Naive thymus-derived CD4-positive, alpha-beta T cell (primary cell): ENCODE measurements at regions of chr1 and their contacts with region 1.

Region 1: DNA sequence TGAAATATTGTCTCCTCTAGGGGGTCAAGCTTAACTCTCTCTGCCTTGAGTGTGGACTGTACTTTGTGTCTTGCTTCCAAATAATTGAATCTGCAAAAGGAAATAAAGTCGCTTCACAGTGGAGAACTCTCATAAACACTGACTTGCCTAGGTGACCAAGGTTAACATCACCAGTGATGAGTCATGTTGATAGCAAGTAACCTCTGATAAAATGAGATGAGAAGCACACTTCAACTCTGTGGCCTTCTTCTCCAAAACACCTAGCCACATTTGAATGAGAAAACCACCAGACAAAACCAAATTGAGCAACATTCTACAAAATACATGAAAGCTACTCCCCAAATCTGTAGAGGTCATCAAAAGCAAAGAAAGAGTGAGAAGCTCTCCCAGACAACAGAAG is 37.6 kb downstream of the PDE4B start:
- DNase-seq: no peak
- ATAC-seq: no peak
- H3K4me3 ChIP-seq: no peak overlapping the region
- H3K4me3 Mint-ChIP-seq: peak overlapping the region in 1 of 10 donors; percentile 18
- H3K27ac ChIP-seq: no peak overlapping the region
- H3K27ac Mint-ChIP-seq: peak overlapping the region in 1 of 9 donors; percentile 10
- H3K4me1 ChIP-seq: no peaks in the 10 kb centered on the region
- H3K4me1 Mint-ChIP-seq: peaks cover 0 to 14% (median 0%) of the 10 kb centered on the region in 7 donors
- H3K27me3 ChIP-seq: no peaks in the 10 kb centered on the region
- H3K27me3 Mint-ChIP-seq: peaks cover 11 to 44% (median 20%) of the 10 kb centered on the region in 5 donors

Region 2: GRCh38 chr1:64437453-64437852 is 1392.9 kb before region 1 on chr1:
- CTCF ChIA-PET with region 1: no interaction called
- POLR2A ChIA-PET with region 1: no interaction called
- intact Hi-C with region 1: no loop called
- DNase-seq: no peak
- ATAC-seq: no peak
- H3K4me3 ChIP-seq: no peak overlapping the region
- H3K4me3 Mint-ChIP-seq: no peak overlapping the region
- H3K27ac ChIP-seq: no peak overlapping the region
- H3K27ac Mint-ChIP-seq: no peak overlapping the region
- H3K4me1 ChIP-seq: no peaks in the 10 kb centered on the region
- H3K4me1 Mint-ChIP-seq: no peaks in the 10 kb centered on the region
- H3K27me3 ChIP-seq: no peaks in the 10 kb centered on the region
- H3K27me3 Mint-ChIP-seq: peaks cover 0 to 5% (median 0%) of the 10 kb centered on the region in 5 donors

Region 3: DNA sequence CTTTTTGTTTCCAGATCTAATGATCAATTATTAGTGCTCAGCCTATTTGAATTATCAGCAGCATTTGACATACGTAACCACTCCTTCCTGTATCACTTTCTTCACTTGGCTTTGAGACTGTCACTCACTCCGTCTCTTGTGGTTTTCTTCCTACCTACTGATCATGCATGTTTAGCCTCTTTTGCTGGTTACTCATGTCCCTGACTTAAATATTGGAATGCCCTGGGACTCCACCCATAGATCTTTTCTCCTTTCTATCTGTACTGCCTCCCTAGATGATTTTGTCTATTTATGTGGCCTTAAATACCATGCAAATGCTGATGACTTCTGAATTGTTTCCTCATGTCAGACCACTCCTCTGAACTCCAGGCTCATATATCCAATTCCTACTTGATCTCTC is 95.3 kb before region 1 on chr1:
- CTCF ChIA-PET with region 1: no interaction called
- POLR2A ChIA-PET with region 1: no interaction called
- intact Hi-C with region 1: no loop called
- DNase-seq: no peak
- ATAC-seq: no peak
- H3K4me3 ChIP-seq: no peak overlapping the region
- H3K4me3 Mint-ChIP-seq: no peak overlapping the region
- H3K27ac ChIP-seq: no peak overlapping the region
- H3K27ac Mint-ChIP-seq: no peak overlapping the region
- H3K4me1 ChIP-seq: no peaks in the 10 kb centered on the region
- H3K4me1 Mint-ChIP-seq: no peaks in the 10 kb centered on the region
- H3K27me3 ChIP-seq: no peaks in the 10 kb centered on the region
- H3K27me3 Mint-ChIP-seq: peaks cover 0 to 13% (median 6%) of the 10 kb centered on the region in 5 donors

Region 4: GRCh38 chr1:65792669-65793358 is 37.5 kb before region 1 on chr1 and contains the start of gene PDE4B:
- CTCF ChIA-PET with region 1: no interaction called
- POLR2A ChIA-PET with region 1: no interaction called
- intact Hi-C with region 1: loop called in 1 of 2 experiments (anchors 5 kb)
- DNase-seq: no peak
- ATAC-seq: no peak
- H3K4me3 ChIP-seq: no peak within 1 kb of the TSS
- H3K4me3 Mint-ChIP-seq: peak within 1 kb of the TSS in 1 of 10 donors; percentile 62
- H3K27ac ChIP-seq: no peak within 1 kb of the TSS
- H3K27ac Mint-ChIP-seq: no peak within 1 kb of the TSS
- H3K4me1 ChIP-seq: no peaks in the 10 kb centered on the region
- H3K4me1 Mint-ChIP-seq: peaks cover 0 to 4% (median 0%) of the 10 kb centered on the region in 7 donors
- H3K27me3 ChIP-seq: no peaks in the 10 kb centered on the region
- H3K27me3 Mint-ChIP-seq: peaks cover 34 to 75% (median 41%) of the 10 kb centered on the region in 5 donors
- total RNA-seq, gene PDE4B: 43.5 to 99.2 (median 46.7) TPM

Region 5: GRCh38 chr1:65812065-65812464 is 18.2 kb before region 1 on chr1:
- CTCF ChIA-PET with region 1: no interaction called
- POLR2A ChIA-PET with region 1: no interaction called
- intact Hi-C with region 1: loop called in 1 of 2 experiments (anchors 1 kb)
- DNase-seq: peak in 1 of 9 donors; percentile 67
- ATAC-seq: peak; percentile 94
- H3K4me3 ChIP-seq: no peak overlapping the region
- H3K4me3 Mint-ChIP-seq: peak overlapping the region in 1 of 10 donors; percentile 3
- H3K27ac ChIP-seq: no peak overlapping the region
- H3K27ac Mint-ChIP-seq: peak overlapping the region in 1 of 9 donors; percentile 67
- H3K4me1 ChIP-seq: no peaks in the 10 kb centered on the region
- H3K4me1 Mint-ChIP-seq: peaks cover 0 to 26% (median 0%) of the 10 kb centered on the region in 7 donors
- H3K27me3 ChIP-seq: no peaks in the 10 kb centered on the region
- H3K27me3 Mint-ChIP-seq: peaks cover 18 to 24% (median 19%) of the 10 kb centered on the region in 5 donors

Region 6: GRCh38 chr1:65866439-65866838 is 36.1 kb after region 1 on chr1:
- CTCF ChIA-PET with region 1: no interaction called
- POLR2A ChIA-PET with region 1: no interaction called
- intact Hi-C with region 1: loop called in 1 of 2 experiments (anchors 1 kb)
- DNase-seq: no peak
- ATAC-seq: no peak
- H3K4me3 ChIP-seq: no peak overlapping the region
- H3K4me3 Mint-ChIP-seq: no peak overlapping the region
- H3K27ac ChIP-seq: no peak overlapping the region
- H3K27ac Mint-ChIP-seq: no peak overlapping the region
- H3K4me1 ChIP-seq: no peaks in the 10 kb centered on the region
- H3K4me1 Mint-ChIP-seq: peaks cover 0 to 10% (median 0%) of the 10 kb centered on the region in 7 donors
- H3K27me3 ChIP-seq: no peaks in the 10 kb centered on the region
- H3K27me3 Mint-ChIP-seq: peaks cover 13 to 30% (median 24%) of the 10 kb centered on the region in 5 donors